ENCODE measurements at regions of chr19 and their contacts with region 1.

Region 1: GRCh38 chr19:44002566-44003460 is at the start of gene ZNF230:
- DNase-seq: peak; percentile 89 to 95 (median 94)
- ATAC-seq: peak; percentile 99 to 100 (median 100)
- H3K4me3 ChIP-seq: peak within 1 kb of the TSS; percentile 61 to 92 (median 82)
- H3K27ac ChIP-seq: peak within 1 kb of the TSS; percentile 37 to 84 (median 75)
- H3K4me1 ChIP-seq: peaks cover 0 to 28% (median 11%) of the 10 kb centered on the region in 12 donors
- H3K27me3 ChIP-seq: no peaks in the 10 kb centered on the region
- CTCF ChIP-seq: no peak
- POLR2A ChIP-seq: peak in 1 of 2 donors; percentile 41
- total RNA-seq, gene ZNF230: 1.7 to 4.3 (median 2.5) TPM

Region 2: DNA sequence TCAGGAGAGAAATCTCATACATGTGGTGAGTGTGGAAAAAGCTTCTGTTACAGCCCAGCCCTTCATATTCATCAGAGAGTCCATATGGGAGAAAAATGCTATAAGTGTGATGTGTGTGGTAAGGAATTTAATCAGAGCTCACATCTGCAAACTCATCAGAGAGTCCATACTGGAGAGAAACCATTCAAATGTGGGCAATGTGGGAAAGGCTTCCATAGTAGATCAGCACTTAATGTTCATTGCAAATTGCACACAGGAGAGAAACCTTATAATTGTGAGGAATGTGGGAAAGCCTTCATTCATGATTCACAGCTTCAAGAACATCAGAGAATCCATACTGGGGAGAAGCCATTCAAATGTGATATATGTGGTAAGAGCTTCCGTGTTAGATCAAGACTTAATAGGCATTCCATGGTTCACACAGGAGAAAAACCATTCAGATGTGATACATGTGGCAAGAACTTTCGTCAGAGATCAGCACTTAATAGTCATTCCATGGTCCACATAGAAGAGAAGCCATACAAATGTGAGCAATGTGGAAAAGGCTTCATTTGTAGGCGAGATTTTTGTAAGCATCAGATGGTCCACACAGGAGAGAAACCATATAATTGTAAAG is 36.6 kb before region 1 on chr19:
- intact Hi-C with region 1: no loop called
- DNase-seq: no peak
- ATAC-seq: no peak
- H3K4me3 ChIP-seq: no peak overlapping the region
- H3K27ac ChIP-seq: no peak overlapping the region
- H3K4me1 ChIP-seq: no peaks in the 10 kb centered on the region
- H3K27me3 ChIP-seq: no peaks in the 10 kb centered on the region
- CTCF ChIP-seq: no peak
- POLR2A ChIP-seq: no peak

Region 3: GRCh38 chr19:43983912-43984686 is 18.7 kb before region 1 on chr19 and contains the start of gene ZNF155:
- intact Hi-C with region 1: loop called in 6 of 10 experiments (anchors 1 to 2 kb)
- DNase-seq: peak; percentile 92 to 97 (median 96)
- ATAC-seq: peak; percentile 99 to 100 (median 100)
- H3K4me3 ChIP-seq: peak within 1 kb of the TSS; percentile 51 to 89 (median 72)
- H3K27ac ChIP-seq: peak within 1 kb of the TSS in 11 of 12 donors; percentile 63 to 91 (median 76)
- H3K4me1 ChIP-seq: peaks cover 0 to 15% (median 7%) of the 10 kb centered on the region in 12 donors
- H3K27me3 ChIP-seq: no peaks in the 10 kb centered on the region
- CTCF ChIP-seq: no peak
- POLR2A ChIP-seq: no peak
- total RNA-seq, gene ZNF155: 4.0 to 7.7 (median 6.6) TPM

Region 4: DNA sequence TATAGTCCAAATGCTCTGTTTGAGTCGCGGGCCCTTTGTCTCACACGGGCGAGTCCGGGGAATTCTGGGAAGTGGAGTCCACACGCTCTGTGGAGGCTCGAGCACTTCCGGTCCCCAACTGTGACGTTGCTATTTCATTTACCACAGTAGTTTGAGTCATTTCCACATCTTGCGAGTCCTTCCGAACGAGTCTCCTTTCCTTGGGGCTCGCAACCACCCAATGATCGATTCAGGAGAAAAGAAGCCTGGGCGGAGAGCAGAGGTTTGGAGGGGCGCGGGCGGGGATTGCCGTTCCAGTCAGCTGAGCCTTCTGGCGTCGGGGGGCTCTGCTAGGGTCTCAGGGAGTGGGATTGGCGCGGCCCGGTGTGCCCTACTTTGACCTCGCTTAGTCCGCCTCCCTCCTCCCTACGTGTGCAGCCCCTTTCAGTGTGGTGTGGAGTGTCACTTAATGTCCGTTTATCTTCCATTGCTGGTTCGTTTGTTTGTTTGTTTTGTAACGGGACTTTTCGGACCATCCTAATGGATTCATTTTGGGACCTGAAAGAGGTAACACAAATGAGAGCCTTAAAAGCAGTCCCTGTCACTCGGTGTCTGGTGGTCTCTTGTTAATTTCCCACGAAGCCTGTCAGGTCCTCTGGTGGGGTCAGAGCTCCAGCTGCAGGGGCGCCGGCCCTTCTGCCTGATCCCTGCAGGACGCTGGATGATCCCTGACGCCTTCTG is 22.6 kb after region 1 on chr19 and contains the start of gene ZNF222:
- intact Hi-C with region 1: loop called in 2 of 10 experiments (anchors 1 to 2 kb)
- DNase-seq: peak; percentile 85 to 91 (median 87)
- ATAC-seq: peak; percentile 90 to 100 (median 100)
- H3K4me3 ChIP-seq: peak within 1 kb of the TSS; percentile 62 to 92 (median 82)
- H3K27ac ChIP-seq: peak within 1 kb of the TSS; percentile 27 to 82 (median 64)
- H3K4me1 ChIP-seq: peaks cover 0 to 9% (median 4%) of the 10 kb centered on the region in 12 donors
- H3K27me3 ChIP-seq: peaks cover 0 to 3% (median 0%) of the 10 kb centered on the region in 9 donors
- CTCF ChIP-seq: no peak
- POLR2A ChIP-seq: no peak
- total RNA-seq, gene ZNF222: 2.3 to 5.0 (median 3.9) TPM

Region 5: DNA sequence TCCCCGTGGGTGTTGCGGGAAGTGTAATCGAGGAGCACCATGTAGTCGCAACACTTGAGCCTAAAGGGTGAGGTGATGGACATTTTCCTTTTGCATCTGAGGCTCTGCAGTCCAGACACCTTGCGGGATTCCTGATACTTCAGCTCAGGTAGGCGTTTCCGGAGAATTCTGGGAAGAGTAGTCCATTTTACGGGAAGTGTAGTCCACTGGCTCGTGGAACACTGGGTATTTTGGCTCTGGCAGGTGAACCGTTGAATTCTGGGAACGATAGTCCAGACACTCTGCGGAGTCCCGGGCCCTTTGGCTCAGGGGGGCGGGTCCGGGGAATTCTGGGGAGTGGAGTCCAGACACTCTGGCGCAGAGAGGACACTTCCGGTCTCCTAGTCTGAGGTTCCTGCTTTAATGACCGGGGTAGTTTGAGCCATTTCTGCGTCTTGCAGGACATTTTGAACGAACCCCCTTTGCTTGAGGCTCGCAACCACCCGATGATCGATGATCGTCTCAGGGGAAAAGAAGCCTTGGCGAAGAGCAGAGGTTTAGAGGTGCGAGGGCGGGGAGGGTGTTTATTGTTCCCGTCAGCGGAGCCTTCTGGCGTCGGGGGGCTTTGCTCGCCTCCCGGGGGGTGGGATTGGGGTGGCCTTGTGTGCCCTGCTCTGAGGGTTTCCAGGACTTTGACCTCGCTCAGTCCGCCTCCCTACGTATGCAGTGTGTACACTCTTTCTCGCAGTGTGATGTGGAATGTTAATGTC is 49.0 kb after region 1 on chr19 and contains the start of gene ZNF223:
- intact Hi-C with region 1: loop called in 2 of 10 experiments (anchors 5 to 10 kb)
- DNase-seq: peak; percentile 94 to 97 (median 97)
- ATAC-seq: peak; percentile 100
- H3K4me3 ChIP-seq: peak within 1 kb of the TSS; percentile 64 to 85 (median 74)
- H3K27ac ChIP-seq: peak within 1 kb of the TSS; percentile 27 to 79 (median 66)
- H3K4me1 ChIP-seq: peaks cover 0 to 21% (median 13%) of the 10 kb centered on the region in 12 donors
- H3K27me3 ChIP-seq: peaks cover 0 to 27% (median 5%) of the 10 kb centered on the region in 9 donors
- CTCF ChIP-seq: no peak
- POLR2A ChIP-seq: no peak
- total RNA-seq, gene ZNF223: 1.7 to 5.1 (median 3.2) TPM

Region 6: DNA sequence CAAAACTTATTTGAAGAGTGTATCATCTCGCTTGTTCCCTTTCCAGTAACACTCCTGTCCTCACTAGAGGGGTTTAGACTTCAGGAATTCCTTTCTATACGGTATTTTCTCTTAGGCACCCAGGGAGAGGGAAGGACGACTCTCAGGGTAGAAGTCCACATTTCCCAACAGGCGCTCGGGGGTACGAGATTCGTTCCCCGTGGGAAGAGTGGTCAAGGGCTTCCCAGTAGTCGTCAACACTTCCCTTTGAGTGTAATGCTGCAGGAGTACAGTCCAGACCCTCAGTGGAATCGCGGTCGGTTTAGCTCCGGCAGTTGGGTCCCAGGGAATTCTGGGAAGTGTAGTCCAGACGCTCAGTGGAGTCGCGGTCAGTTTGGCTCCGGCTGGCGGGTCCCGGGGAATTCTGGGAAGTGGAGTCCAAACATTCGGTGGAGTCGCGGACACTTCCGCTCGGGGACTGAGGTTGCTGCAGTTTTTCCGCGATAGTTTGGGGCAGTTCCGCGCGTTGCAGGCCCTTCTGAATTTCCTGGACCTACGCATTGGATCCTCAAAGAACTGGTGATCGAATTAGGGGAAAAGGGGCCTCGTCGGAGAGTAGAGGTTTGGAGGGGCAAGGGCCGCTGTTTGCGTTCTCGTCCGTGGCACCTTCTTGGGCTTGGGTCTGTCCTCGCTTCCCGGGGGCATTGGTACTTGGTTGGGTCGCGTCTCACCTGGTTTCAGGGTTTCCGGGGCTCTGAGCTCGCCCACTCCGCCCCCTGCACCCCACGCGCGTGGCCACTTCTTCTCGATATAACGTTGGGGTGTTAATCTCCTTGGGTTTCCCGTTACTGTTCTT is 91.3 kb after region 1 on chr19 and contains the start of gene ZNF224:
- intact Hi-C with region 1: loop called in 4 of 10 experiments (anchors 2 to 10 kb)
- DNase-seq: peak; percentile 93 to 95 (median 94)
- ATAC-seq: peak; percentile 95 to 99 (median 99)
- H3K4me3 ChIP-seq: peak within 1 kb of the TSS; percentile 67 to 89 (median 77)
- H3K27ac ChIP-seq: peak within 1 kb of the TSS in 11 of 12 donors; percentile 51 to 86 (median 76)
- H3K4me1 ChIP-seq: peaks cover 0 to 24% (median 11%) of the 10 kb centered on the region in 12 donors
- H3K27me3 ChIP-seq: no peaks in the 10 kb centered on the region
- CTCF ChIP-seq: no peak
- POLR2A ChIP-seq: peak in 1 of 2 donors; percentile 62
- total RNA-seq, gene ZNF224: 9.9 to 17.7 (median 13.0) TPM

Region 7: GRCh38 chr19:44107751-44108150 is 104.9 kb after region 1 on chr19:
- intact Hi-C with region 1: loop called in 2 of 10 experiments (anchors 10 kb)
- DNase-seq: no peak
- ATAC-seq: no peak
- H3K4me3 ChIP-seq: no peak overlapping the region
- H3K27ac ChIP-seq: no peak overlapping the region
- H3K4me1 ChIP-seq: peaks cover 0 to 12% (median 8%) of the 10 kb centered on the region in 12 donors
- H3K27me3 ChIP-seq: no peaks in the 10 kb centered on the region
- CTCF ChIP-seq: no peak
- POLR2A ChIP-seq: no peak

Region 8: GRCh38 chr19:44164673-44165512 is 162.1 kb after region 1 on chr19 and contains the start of gene ZNF226:
- intact Hi-C with region 1: loop called in 1 of 10 experiments (anchors 5 kb)
- DNase-seq: peak; percentile 88 to 94 (median 93)
- ATAC-seq: peak; percentile 99 to 100 (median 100)
- H3K4me3 ChIP-seq: peak within 1 kb of the TSS; percentile 50 to 92 (median 73)
- H3K27ac ChIP-seq: peak within 1 kb of the TSS; percentile 59 to 91 (median 88)
- H3K4me1 ChIP-seq: peaks cover 0 to 22% (median 11%) of the 10 kb centered on the region in 12 donors
- H3K27me3 ChIP-seq: no peaks in the 10 kb centered on the region
- CTCF ChIP-seq: no peak
- POLR2A ChIP-seq: peak in 1 of 2 donors; percentile 76
- total RNA-seq, gene ZNF226: 12.2 to 29.2 (median 21.1) TPM

Measured in heart left ventricle (tissue), 16 donors.